ENCODE measurements at regions of chr4 and their contacts with region 1.

Region 1: GRCh38 chr4:83440899-83441298 is 14.7 kb downstream of the HELQ start:
- DNase-seq: no peak
- ATAC-seq: no peak
- H3K4me3 ChIP-seq: no peak overlapping the region
- H3K4me3 Mint-ChIP-seq: no peak overlapping the region
- H3K27ac ChIP-seq: no peak overlapping the region
- H3K27ac Mint-ChIP-seq: no peak overlapping the region
- H3K4me1 ChIP-seq: no peaks in the 10 kb centered on the region
- H3K4me1 Mint-ChIP-seq: peaks cover 0 to 2% (median 1%) of the 10 kb centered on the region in 3 donors
- H3K27me3 ChIP-seq: no peaks in the 10 kb centered on the region
- H3K27me3 Mint-ChIP-seq: no peaks in the 10 kb centered on the region

Region 2: DNA sequence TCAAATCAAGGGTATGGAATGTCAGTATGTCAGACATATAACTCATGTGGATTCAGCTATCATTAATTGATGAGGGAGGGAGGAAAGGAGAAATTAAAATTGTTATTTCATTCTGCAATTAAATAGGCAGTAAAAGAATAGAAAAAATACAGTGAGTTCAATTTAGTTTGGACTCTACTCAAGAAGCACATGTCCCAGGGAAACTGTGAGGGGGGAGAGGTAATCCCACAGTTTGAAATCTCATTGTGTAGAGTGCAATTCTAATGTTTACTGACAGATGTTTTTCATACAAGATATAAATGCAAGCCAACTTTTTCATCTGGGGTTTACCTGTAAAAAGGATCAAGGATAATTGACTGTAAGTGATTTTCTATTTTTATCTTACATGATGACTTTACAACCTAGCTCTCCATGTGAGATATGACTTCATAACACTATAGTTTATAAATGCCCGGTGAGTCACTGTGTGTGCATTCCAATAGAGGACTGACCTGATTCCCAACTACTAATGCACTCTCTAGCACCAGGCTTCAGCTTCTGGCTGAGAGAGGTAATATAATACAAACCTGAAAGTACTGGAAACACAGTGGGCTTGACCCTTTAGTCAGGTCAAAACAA is 607.1 kb before region 1 on chr4:
- CTCF ChIA-PET with region 1: no interaction called
- POLR2A ChIA-PET with region 1: interaction called in 1 of 2 experiments, 16 read pairs
- DNase-seq: no peak
- ATAC-seq: no peak
- H3K4me3 ChIP-seq: no peak overlapping the region
- H3K4me3 Mint-ChIP-seq: no peak overlapping the region
- H3K27ac ChIP-seq: no peak overlapping the region
- H3K27ac Mint-ChIP-seq: no peak overlapping the region
- H3K4me1 ChIP-seq: no peaks in the 10 kb centered on the region
- H3K4me1 Mint-ChIP-seq: no peaks in the 10 kb centered on the region
- H3K27me3 ChIP-seq: no peaks in the 10 kb centered on the region
- H3K27me3 Mint-ChIP-seq: no peaks in the 10 kb centered on the region

Region 3: GRCh38 chr4:83170952-83171399 is 269.9 kb before region 1 on chr4:
- CTCF ChIA-PET with region 1: no interaction called
- POLR2A ChIA-PET with region 1: no interaction called
- DNase-seq: no peak
- ATAC-seq: no peak
- H3K4me3 ChIP-seq: no peak overlapping the region
- H3K4me3 Mint-ChIP-seq: no peak overlapping the region
- H3K27ac ChIP-seq: no peak overlapping the region
- H3K27ac Mint-ChIP-seq: no peak overlapping the region
- H3K4me1 ChIP-seq: no peaks in the 10 kb centered on the region
- H3K4me1 Mint-ChIP-seq: peaks cover 15 to 29% (median 18%) of the 10 kb centered on the region in 3 donors
- H3K27me3 ChIP-seq: no peaks in the 10 kb centered on the region
- H3K27me3 Mint-ChIP-seq: no peaks in the 10 kb centered on the region

Region 4: DNA sequence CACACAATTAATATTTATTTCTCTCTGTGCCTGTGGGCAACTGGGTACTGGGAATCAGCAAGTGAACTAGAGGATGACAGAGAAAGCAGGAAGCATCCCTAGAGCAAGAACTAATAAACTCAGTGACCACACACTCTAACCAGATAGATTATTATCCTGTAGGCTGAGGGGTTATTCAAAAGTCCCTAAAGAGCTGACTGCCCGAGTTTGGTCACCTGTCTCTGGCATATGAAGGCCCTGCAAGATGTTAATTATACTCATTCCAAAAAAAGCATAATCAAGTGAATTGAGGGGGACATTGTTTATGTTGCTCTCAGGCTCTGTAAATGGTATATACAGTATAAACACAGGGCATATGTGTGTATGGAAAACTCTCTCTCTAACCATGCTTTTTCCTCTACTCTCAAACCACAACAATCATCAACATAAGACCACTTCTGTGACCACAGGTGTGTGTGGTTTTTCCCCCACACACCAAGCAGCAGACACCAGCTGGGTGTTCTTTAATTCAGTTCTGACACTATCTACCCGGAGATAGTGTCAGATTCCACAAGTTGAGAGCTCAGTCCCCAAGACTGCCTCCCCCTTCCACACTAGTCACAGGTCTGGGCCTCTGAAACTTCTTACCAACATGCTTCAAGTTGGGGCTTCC is 100.1 kb before region 1 on chr4:
- CTCF ChIA-PET with region 1: no interaction called
- POLR2A ChIA-PET with region 1: interaction called in 1 of 2 experiments, 10 read pairs
- DNase-seq: peak in 18 of 35 experiments; percentile 1 to 54 (median 10)
- ATAC-seq: peak in 3 of 4 experiments; percentile 48 to 82 (median 72)
- H3K4me3 ChIP-seq: no peak overlapping the region
- H3K4me3 Mint-ChIP-seq: peak overlapping the region in 1 of 3 donors; percentile 11
- H3K27ac ChIP-seq: no peak overlapping the region
- H3K27ac Mint-ChIP-seq: peak overlapping the region in 1 of 2 donors; percentile 16
- H3K4me1 ChIP-seq: peaks cover 12 to 13% of the 10 kb centered on the region in 2 experiments
- H3K4me1 Mint-ChIP-seq: peaks cover 15 to 28% (median 23%) of the 10 kb centered on the region in 3 donors
- H3K27me3 ChIP-seq: peaks cover 0 to 7% of the 10 kb centered on the region in 2 experiments
- H3K27me3 Mint-ChIP-seq: peaks cover 0 to 6% of the 10 kb centered on the region in 2 donors

Measured in T-cell (primary cell).